Ovary (tissue), 10 donors: ENCODE measurements at regions of chr2 and their contacts with region 1.

Region 1: DNA sequence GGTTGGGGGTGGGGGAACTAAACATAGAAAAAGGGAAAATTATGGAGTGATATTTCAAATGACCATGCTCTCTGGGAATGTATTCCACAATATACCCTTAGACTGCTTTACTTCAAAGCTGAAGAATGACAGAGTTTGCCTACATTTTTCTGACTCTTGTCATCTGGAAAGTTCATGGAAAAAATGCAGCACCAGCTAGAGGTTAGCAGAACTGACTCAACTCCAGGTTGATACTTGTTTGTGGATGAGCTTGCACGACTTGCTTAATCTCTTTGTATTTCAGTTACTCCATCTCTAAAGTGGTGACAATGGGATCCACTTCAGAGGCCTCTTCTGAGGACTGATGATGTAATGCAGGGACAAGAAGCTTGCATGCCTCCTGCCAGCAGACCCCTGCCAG is 824.0 kb upstream of the ID2 start:
- DNase-seq: no peak
- H3K4me3 ChIP-seq: no peak overlapping the region
- H3K27ac ChIP-seq: no peak overlapping the region
- H3K4me1 ChIP-seq: no peaks in the 10 kb centered on the region
- H3K27me3 ChIP-seq: no peaks in the 10 kb centered on the region
- CTCF ChIP-seq: no peak
- EP300 ChIP-seq: no peak
- POLR2A ChIP-seq: no peak

Region 2: GRCh38 chr2:7744827-7745226 is 113.1 kb before region 1 on chr2:
- intact Hi-C with region 1: no loop called
- DNase-seq: no peak
- H3K4me3 ChIP-seq: no peak overlapping the region
- H3K27ac ChIP-seq: no peak overlapping the region
- H3K4me1 ChIP-seq: no peaks in the 10 kb centered on the region
- H3K27me3 ChIP-seq: no peaks in the 10 kb centered on the region
- CTCF ChIP-seq: no peak
- EP300 ChIP-seq: no peak
- POLR2A ChIP-seq: no peak

Region 3: DNA sequence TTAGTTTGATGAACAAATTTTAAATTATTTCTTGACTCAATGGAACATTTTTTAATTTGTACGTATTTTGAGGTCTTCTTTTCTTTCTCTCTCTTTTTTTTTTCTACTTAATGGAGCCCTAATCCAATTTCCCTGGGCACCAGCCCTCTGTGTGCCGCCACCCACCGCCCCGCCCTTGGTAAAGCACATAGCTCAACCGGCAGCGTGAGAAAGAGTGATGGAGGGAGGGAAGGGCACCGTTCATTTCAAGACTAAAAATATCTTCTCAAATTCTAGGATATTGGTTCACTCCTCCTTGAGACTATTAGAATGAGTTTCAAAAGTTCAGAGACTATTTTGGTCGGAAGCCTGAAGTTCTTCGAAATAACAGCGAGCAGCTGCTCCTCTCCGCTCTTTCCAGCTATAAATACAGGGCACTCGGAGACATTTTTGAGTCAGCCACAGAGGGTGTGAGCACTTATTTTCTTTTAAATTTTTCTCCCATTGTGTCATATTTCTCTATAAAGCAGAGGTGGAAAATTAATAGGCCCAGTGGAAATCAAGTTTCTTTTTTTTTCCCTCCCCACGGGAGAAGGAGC is 92.2 kb after region 1 on chr2:
- intact Hi-C with region 1: no loop called
- DNase-seq: no peak
- H3K4me3 ChIP-seq: no peak overlapping the region
- H3K27ac ChIP-seq: peak overlapping the region in 1 of 2 donors; percentile 10
- H3K4me1 ChIP-seq: peaks cover 10% of the 10 kb centered on the region
- H3K27me3 ChIP-seq: no peaks in the 10 kb centered on the region
- CTCF ChIP-seq: no peak
- EP300 ChIP-seq: no peak
- POLR2A ChIP-seq: no peak

Region 4: DNA sequence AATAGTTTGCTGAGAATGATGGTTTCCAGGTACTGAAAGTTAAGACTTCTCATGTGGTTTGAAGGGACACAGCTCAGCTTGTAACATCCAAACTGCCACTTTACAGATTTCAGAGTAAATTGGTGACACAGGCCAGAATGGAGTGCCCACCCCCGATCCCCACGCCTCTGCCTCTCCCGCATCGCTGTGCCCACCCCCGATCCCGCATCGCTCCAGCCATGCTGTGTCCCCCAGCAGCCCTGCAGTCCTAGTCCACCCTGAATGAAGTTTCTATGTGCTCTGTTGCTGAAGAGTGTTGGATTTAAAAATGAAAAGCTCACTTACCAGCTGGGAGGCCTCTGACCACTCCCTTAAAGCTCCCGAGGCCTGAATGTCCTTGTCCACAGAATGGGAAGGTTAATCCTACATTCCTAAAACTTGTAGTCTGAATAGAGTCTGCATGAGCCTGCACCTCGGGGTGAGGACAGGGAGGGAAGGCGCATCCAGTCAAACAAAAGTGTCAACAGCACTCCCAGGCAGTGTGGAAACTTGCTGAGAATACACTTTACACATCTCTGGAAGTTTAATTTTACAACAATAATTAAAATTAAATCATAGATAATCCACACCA is 647.5 kb after region 1 on chr2:
- intact Hi-C with region 1: loop called in 1 of 4 experiments (anchors 5 kb)
- DNase-seq: no peak
- H3K4me3 ChIP-seq: no peak overlapping the region
- H3K27ac ChIP-seq: no peak overlapping the region
- H3K4me1 ChIP-seq: peaks cover 5% of the 10 kb centered on the region
- H3K27me3 ChIP-seq: no peaks in the 10 kb centered on the region
- CTCF ChIP-seq: no peak
- EP300 ChIP-seq: no peak
- POLR2A ChIP-seq: no peak

Region 5: GRCh38 chr2:9654429-9655100 is 1796.7 kb after region 1 on chr2:
- intact Hi-C with region 1: loop called in 1 of 4 experiments (anchors 5 kb)
- DNase-seq: no peak
- H3K4me3 ChIP-seq: no peak overlapping the region
- H3K27ac ChIP-seq: no peak overlapping the region
- H3K4me1 ChIP-seq: peaks cover 8% of the 10 kb centered on the region
- H3K27me3 ChIP-seq: no peaks in the 10 kb centered on the region
- CTCF ChIP-seq: no peak
- EP300 ChIP-seq: no peak
- POLR2A ChIP-seq: no peak